Endothelial cell of umbilical vein (primary cell): ENCODE measurements at regions of chr4 and their contacts with region 1.

Region 1: GRCh38 chr4:30537456-30537855 is 182.7 kb upstream of the PCDH7 start:
- DNase-seq: peak; percentile 92
- H3K4me3 ChIP-seq: no peak overlapping the region
- H3K27ac ChIP-seq: peak overlapping the region; percentile 65
- H3K4me1 ChIP-seq: peaks cover 25% of the 10 kb centered on the region
- H3K27me3 ChIP-seq: no peaks in the 10 kb centered on the region
- CTCF ChIP-seq: no peak
- POLR2A ChIP-seq: no peak

Region 2: DNA sequence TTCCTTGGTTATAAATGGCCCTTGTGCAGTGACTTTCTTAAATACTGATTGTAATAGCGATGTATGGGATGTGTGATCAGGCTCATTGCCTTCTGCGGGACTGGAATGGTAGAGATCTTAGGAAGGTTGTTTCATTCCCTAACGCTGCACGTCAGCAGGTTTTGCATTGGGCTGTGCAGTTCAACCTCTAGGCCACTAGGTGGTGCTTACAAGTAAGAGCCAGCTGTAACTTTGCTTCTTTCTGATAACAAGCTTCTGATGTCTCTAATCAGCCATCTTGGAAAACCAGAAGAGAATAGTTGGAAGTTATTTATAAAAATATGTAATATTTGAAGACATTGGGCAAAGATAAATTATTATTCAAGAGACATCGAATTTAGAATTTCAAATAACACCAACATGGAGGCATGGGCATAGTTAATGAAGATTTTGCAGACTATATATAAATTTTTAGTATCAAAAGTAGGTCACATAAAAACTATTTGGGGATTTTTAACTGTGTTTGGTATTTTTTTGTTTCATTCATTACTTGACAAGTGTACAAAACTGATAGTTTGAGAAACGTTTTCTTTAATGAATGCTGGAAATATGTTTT is 157.0 kb before region 1 on chr4:
- CTCF ChIA-PET with region 1: interaction called, 5 read pairs
- POLR2A ChIA-PET with region 1: no interaction called
- dilution Hi-C with region 1: no loop called
- intact Hi-C with region 1: loop called (anchors 1 kb)
- DNase-seq: peak; percentile 76
- H3K4me3 ChIP-seq: no peak overlapping the region
- H3K27ac ChIP-seq: no peak overlapping the region
- H3K4me1 ChIP-seq: peaks cover 6% of the 10 kb centered on the region
- H3K27me3 ChIP-seq: no peaks in the 10 kb centered on the region
- CTCF ChIP-seq: peak; percentile 90 to 93
- POLR2A ChIP-seq: no peak

Region 3: DNA sequence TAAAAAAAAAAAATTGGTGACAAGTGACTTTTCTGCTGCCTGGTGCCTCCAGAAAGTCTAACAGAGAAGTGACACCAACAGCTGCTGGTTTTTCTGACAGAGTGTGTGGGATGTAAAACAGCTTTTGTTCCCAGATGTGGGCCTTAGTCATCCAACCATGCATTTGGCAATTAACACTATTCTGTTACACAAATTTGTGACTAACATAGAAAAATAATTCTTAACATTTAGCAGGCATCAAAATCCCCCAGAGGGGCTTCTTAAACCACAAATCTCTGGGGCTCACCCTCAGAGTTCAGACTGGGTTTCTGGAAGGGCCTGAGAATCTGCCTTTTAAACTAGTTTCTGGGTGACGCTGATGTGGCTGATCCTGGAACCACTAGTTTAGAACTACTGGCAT is 82.2 kb after region 1 on chr4:
- CTCF ChIA-PET with region 1: no interaction called
- POLR2A ChIA-PET with region 1: no interaction called
- dilution Hi-C with region 1: no loop called
- intact Hi-C with region 1: no loop called
- DNase-seq: no peak
- H3K4me3 ChIP-seq: no peak overlapping the region
- H3K27ac ChIP-seq: no peak overlapping the region
- H3K4me1 ChIP-seq: no peaks in the 10 kb centered on the region
- H3K27me3 ChIP-seq: no peaks in the 10 kb centered on the region
- CTCF ChIP-seq: no peak
- POLR2A ChIP-seq: no peak